Heart right ventricle (tissue), 16 donors: ENCODE measurements at regions of chr4 and their contacts with region 1.

Region 1: GRCh38 chr4:121827853-121828252 is 4.2 kb upstream of the CCNA2 start:
- DNase-seq: no peak
- ATAC-seq: no peak
- H3K4me3 ChIP-seq: no peak overlapping the region
- H3K27ac ChIP-seq: no peak overlapping the region
- H3K4me1 ChIP-seq: peaks cover 0 to 16% (median 7%) of the 10 kb centered on the region in 9 donors
- H3K27me3 ChIP-seq: no peaks in the 10 kb centered on the region
- CTCF ChIP-seq: no peak

Region 2: GRCh38 chr4:120163895-120164294 is 1664.0 kb before region 1 on chr4:
- intact Hi-C with region 1: no loop called
- DNase-seq: no peak
- ATAC-seq: peak in 3 of 8 donors; percentile 44 to 67 (median 53)
- H3K4me3 ChIP-seq: no peak overlapping the region
- H3K27ac ChIP-seq: no peak overlapping the region
- H3K4me1 ChIP-seq: peaks cover 0 to 16% (median 7%) of the 10 kb centered on the region in 9 donors
- H3K27me3 ChIP-seq: no peaks in the 10 kb centered on the region
- CTCF ChIP-seq: no peak

Region 3: DNA sequence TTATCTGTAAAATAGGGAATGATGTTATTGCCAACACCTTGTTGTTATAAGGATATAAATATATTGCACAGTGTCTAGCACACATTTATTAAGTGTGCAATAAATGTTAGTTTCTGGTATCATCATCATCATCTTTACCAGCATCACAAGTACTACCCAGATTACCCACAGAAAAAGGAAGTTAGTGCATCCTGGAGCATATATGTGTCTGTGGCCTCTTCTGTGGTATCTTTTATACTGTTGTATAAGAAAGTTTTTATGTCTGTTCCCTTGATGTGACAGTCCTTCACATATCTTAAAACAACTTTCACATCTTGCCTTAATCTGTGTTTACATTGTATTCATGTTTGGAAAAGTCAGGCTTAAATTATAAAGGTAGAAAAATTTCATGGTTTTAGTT is 16.7 kb before region 1 on chr4:
- intact Hi-C with region 1: loop called in 1 of 10 experiments (anchors 2 kb)
- DNase-seq: no peak
- ATAC-seq: no peak
- H3K4me3 ChIP-seq: no peak overlapping the region
- H3K27ac ChIP-seq: no peak overlapping the region
- H3K4me1 ChIP-seq: no peaks in the 10 kb centered on the region
- H3K27me3 ChIP-seq: no peaks in the 10 kb centered on the region
- CTCF ChIP-seq: no peak

Region 4: DNA sequence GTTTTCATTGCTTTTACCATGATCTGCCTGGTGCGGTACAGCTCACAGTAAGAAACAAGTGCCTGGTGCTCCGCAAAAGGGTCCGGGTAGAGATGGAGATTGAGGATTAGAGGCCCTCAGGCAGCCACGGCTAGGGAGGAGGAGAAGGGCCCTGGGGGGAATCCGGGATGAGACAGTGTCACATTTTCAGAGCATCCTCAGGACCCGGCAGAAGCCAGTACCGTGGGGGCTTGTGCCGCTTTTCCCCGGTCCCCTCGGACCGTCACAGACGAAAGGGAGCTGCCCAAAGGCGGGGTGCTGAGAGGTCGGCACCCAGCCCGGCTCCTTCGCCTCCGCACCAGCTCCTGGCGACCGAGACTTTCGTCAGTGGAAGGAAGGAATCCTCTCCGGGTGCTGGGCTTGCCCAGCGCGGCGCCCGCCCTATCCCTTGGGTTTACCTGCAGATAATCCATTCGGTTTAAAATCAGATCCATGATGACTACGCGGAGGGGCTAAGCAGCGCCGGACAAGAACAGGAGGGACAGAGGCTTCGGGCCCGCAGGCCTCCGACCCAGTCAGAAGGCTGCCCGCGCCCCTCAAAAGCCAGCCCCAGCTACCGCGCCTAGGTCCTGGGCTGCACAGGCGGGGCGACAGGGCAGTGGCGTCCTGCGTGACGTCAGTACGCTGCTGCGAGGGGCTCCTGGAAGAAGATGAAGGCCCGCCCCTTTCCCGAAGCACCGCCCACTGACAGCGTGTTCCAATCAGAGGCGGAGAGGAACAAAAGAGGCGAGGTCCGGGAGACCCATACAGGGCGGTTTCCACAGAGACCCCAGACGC is 42.2 kb after region 1 on chr4 and contains the start of gene BBS7:
- intact Hi-C with region 1: loop called in 1 of 10 experiments (anchors 5 kb)
- DNase-seq: peak; percentile 98
- ATAC-seq: peak; percentile 99 to 100 (median 100)
- H3K4me3 ChIP-seq: peak within 1 kb of the TSS; percentile 59 to 98 (median 88)
- H3K27ac ChIP-seq: peak within 1 kb of the TSS; percentile 47 to 91 (median 88)
- H3K4me1 ChIP-seq: peaks cover 0 to 14% (median 7%) of the 10 kb centered on the region in 9 donors
- H3K27me3 ChIP-seq: peaks cover 0 to 4% (median 0%) of the 10 kb centered on the region in 7 donors
- CTCF ChIP-seq: no peak
- total RNA-seq, gene BBS7: 3.2 to 7.7 (median 5.3) TPM